Caco-2 (cell line): ENCODE measurements at regions of chr12 and their contacts with region 1.

Region 1: DNA sequence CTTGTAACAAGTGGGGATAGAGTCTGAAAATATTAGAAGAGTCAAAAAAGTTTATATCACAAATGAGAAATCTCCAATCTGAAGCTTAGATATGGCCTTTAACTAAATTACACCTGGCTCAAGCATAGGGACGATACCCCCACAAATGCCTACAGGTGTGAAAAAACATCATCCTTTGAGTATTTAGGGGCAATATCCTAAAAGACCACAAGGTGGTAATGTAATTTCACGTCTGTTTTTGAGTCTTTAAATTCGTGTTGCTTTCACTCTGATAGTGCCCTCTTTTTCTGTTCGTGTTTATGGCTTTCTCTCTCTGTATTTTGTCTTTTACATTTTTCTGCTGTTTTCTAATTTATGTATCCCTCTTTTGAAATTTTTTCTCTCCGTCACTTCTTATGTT is 84.3 kb downstream of the ETNK1 start:
- DNase-seq: peak in 1 of 2 experiments; percentile 32
- H3K4me3 ChIP-seq: no peak overlapping the region
- H3K4me3 Mint-ChIP-seq: no peak overlapping the region
- H3K27ac Mint-ChIP-seq: no peak overlapping the region
- H3K4me1 ChIP-seq: no peaks in the 10 kb centered on the region
- H3K4me1 Mint-ChIP-seq: no peaks in the 10 kb centered on the region
- H3K27me3 ChIP-seq: no peaks in the 10 kb centered on the region; the same call in 1 of the 2 replicates
- H3K27me3 Mint-ChIP-seq: peaks cover 10% of the 10 kb centered on the region
- CTCF ChIP-seq: peak; percentile 47 to 73

Region 2: DNA sequence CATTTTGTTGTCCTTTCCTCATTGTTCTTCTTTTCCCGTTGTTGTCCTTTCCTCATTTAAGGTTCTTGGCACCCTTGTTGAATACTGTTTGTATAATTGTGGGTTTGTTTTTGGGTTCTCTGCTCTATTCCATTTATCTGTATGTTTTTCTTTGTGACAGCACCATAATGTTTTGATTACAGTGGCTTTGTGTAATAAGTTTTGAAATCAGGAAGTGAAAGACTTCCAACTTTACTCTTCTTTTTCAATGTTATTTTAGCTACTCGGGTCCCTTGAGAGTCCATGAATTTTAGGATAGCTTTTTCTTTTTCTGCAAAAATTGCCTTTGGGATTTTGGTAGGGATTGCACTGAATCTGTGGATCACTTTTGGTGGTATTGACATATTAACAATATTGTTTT is 56.2 kb before region 1 on chr12:
- CTCF ChIA-PET with region 1: no interaction called
- POLR2A ChIA-PET with region 1: no interaction called
- intact Hi-C with region 1: no loop called
- DNase-seq: no peak
- H3K4me3 ChIP-seq: no peak overlapping the region
- H3K4me3 Mint-ChIP-seq: no peak overlapping the region
- H3K27ac Mint-ChIP-seq: no peak overlapping the region
- H3K4me1 ChIP-seq: no peaks in the 10 kb centered on the region
- H3K4me1 Mint-ChIP-seq: no peaks in the 10 kb centered on the region
- H3K27me3 ChIP-seq: no peaks in the 10 kb centered on the region
- H3K27me3 Mint-ChIP-seq: no peaks in the 10 kb centered on the region
- CTCF ChIP-seq: no peak

Region 3: DNA sequence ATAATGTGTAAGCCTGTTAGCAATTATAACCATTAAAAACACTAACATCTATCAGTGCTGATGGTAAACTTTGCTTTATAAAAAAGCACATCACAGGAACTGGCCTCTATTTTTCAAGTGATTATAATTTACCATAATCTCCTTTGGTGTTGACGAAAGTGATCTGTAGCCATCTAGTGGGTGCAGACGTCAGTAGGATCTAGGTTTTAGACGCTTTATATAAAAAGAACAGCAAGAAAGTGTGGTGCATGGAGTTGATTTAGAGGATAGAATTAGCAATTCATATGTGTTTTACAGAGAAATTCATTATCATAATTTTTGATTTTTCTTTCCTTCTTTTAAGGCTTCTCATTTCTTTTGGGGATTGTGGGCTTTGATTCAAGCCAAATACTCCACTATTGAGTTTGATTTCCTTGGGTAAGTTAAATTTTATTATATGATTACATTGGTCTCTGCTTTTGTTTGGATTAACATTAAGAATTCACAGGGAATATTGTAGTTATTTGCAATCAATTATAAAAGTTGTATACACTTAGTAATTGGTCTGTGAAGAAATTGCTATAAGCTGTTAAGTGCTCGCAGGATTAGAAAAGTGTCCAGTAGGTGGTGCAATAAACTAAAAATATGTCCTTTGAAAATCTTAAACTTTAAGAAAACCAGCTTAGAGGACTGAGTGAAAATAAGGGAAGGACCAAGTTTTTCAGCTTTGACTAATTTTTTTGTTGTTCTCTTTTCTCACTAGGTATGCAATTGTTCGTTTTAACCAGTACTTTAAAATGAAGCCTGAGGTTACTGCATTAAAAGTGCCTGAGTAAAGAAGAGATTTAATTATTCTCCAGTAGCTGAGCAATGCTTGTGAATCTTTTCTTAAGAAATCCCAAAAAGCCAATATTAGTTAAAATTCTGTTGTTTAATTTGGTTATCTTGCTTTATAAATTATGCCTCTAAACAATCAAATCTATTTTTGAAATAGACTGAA is 24.9 kb before region 1 on chr12:
- CTCF ChIA-PET with region 1: interaction called, 8 read pairs
- POLR2A ChIA-PET with region 1: no interaction called
- intact Hi-C with region 1: loop called (anchors 2 kb)
- DNase-seq: peak in 1 of 2 experiments; percentile 53
- H3K4me3 ChIP-seq: no peak overlapping the region
- H3K4me3 Mint-ChIP-seq: no peak overlapping the region
- H3K27ac Mint-ChIP-seq: no peak overlapping the region
- H3K4me1 ChIP-seq: no peaks in the 10 kb centered on the region
- H3K4me1 Mint-ChIP-seq: no peaks in the 10 kb centered on the region
- H3K27me3 ChIP-seq: no peaks in the 10 kb centered on the region
- H3K27me3 Mint-ChIP-seq: no peaks in the 10 kb centered on the region
- CTCF ChIP-seq: peak; percentile 70 to 77

Region 4: GRCh38 chr12:22729957-22730443 is 20.7 kb after region 1 on chr12:
- CTCF ChIA-PET with region 1: no interaction called
- POLR2A ChIA-PET with region 1: no interaction called
- intact Hi-C with region 1: loop called (anchors 2 kb)
- DNase-seq: no peak
- H3K4me3 ChIP-seq: no peak overlapping the region
- H3K4me3 Mint-ChIP-seq: no peak overlapping the region
- H3K27ac Mint-ChIP-seq: no peak overlapping the region
- H3K4me1 ChIP-seq: peaks cover 12% of the 10 kb centered on the region
- H3K4me1 Mint-ChIP-seq: peaks cover 6% of the 10 kb centered on the region
- H3K27me3 ChIP-seq: no peaks in the 10 kb centered on the region
- H3K27me3 Mint-ChIP-seq: no peaks in the 10 kb centered on the region
- CTCF ChIP-seq: no peak

Region 5: GRCh38 chr12:22981711-22982110 is 272.4 kb after region 1 on chr12:
- CTCF ChIA-PET with region 1: no interaction called
- POLR2A ChIA-PET with region 1: no interaction called
- intact Hi-C with region 1: loop called (anchors 1 kb)
- DNase-seq: peak in 1 of 2 experiments; percentile 25
- H3K4me3 ChIP-seq: no peak overlapping the region
- H3K4me3 Mint-ChIP-seq: no peak overlapping the region
- H3K27ac Mint-ChIP-seq: no peak overlapping the region
- H3K4me1 ChIP-seq: no peaks in the 10 kb centered on the region
- H3K4me1 Mint-ChIP-seq: no peaks in the 10 kb centered on the region
- H3K27me3 ChIP-seq: no peaks in the 10 kb centered on the region
- H3K27me3 Mint-ChIP-seq: peaks cover 14% of the 10 kb centered on the region
- CTCF ChIP-seq: peak in 1 of 2 experiments; percentile 40

Region 6: DNA sequence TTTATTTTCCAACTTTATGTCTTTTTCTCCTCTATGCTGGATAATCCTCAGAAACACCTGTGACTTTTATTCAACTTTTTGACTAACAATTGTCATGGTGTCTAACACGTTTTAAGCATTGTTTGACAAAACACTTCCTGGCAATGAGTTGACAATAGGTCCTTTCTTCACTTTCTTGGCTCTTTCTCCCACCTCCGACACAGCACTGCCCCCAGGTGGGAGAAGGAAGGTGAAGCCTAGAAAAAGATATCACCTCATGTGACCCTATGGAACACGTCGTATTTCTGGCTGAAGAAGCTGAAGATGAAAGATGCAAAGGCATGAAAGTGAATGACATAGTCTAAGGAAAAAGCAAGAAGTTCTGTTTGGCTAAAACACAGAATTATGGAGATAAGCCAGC is 345.7 kb after region 1 on chr12:
- CTCF ChIA-PET with region 1: no interaction called
- POLR2A ChIA-PET with region 1: no interaction called
- intact Hi-C with region 1: loop called (anchors 1 kb)
- DNase-seq: peak; percentile 50 to 69
- H3K4me3 ChIP-seq: no peak overlapping the region
- H3K4me3 Mint-ChIP-seq: no peak overlapping the region
- H3K27ac Mint-ChIP-seq: no peak overlapping the region
- H3K4me1 ChIP-seq: no peaks in the 10 kb centered on the region
- H3K4me1 Mint-ChIP-seq: no peaks in the 10 kb centered on the region
- H3K27me3 ChIP-seq: no peaks in the 10 kb centered on the region
- H3K27me3 Mint-ChIP-seq: peaks cover 2% of the 10 kb centered on the region
- CTCF ChIP-seq: peak; percentile 68 to 77

Region 7: DNA sequence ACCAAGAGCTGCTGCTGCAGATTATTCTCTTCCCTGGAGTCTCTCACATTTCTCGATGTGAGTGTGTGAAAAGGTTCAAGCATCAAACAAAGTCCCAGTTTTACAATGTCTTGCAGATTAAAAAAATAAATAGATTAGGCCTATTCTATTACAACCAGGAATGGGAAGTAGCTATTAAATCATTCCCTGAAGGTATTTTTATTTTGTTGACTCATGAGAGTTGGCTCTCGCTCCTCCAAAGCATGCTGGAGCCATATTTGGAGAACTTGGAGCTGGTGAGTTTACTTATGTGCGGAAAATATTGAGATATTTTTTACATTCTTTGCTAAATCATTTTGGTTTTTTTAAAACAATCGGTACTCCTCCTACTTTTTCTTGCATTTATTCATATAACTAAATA is 488.0 kb after region 1 on chr12:
- CTCF ChIA-PET with region 1: no interaction called
- POLR2A ChIA-PET with region 1: no interaction called
- intact Hi-C with region 1: no loop called
- DNase-seq: no peak
- H3K4me3 ChIP-seq: no peak overlapping the region
- H3K4me3 Mint-ChIP-seq: no peak overlapping the region
- H3K27ac Mint-ChIP-seq: no peak overlapping the region
- H3K4me1 ChIP-seq: no peaks in the 10 kb centered on the region
- H3K4me1 Mint-ChIP-seq: no peaks in the 10 kb centered on the region
- H3K27me3 ChIP-seq: no peaks in the 10 kb centered on the region
- H3K27me3 Mint-ChIP-seq: peaks cover 12% of the 10 kb centered on the region
- CTCF ChIP-seq: no peak